ENCODE measurements at regions of chr2 and their contacts with region 1.

Region 1: DNA sequence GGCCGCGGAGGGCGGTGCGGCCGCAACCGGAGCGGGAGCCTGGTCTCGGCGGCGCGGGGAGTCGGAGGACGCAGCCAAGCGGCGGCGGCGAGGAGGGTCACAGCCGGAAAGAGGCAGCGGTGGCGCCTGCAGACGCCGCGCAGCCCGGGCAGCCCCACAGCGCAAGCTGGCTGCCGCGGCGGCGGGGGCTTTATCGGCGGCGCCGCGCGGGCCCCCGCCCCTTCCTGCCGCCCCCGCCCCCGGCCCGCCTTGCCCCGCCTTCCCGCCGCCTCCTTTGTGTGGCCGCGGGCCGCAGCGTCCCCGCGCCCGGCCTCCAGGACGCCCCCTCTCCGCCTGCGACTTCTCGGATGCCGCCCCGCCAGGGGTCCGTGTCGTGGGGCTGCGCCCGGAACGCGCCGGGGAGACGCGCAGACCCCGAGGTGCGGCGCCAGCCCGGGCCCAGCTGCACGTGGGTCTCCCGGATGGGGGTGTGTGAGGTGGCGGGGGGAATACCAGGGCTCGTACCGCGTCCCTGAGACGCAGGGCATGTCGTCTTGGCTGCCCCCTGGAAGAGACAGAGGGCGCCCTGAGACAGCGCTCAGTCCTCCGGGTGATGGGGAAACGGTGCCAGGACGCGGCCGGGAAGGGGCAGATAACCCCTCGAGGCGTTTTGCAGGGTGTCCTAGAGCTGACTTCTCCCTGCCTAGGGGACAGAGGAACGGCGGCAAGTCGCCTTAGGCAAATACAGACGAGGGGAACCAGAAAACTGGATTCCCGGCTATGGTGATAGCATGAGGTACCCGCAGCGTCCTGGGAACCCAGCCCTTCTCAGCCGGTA is at the start of gene SERPINE2:
- DNase-seq: peak; percentile 64
- H3K4me3 Mint-ChIP-seq: peak within 1 kb of the TSS; percentile 84
- H3K27ac Mint-ChIP-seq: peak within 1 kb of the TSS; percentile 10
- H3K4me1 Mint-ChIP-seq: peaks cover 28% of the 10 kb centered on the region
- H3K27me3 Mint-ChIP-seq: no peaks in the 10 kb centered on the region
- CTCF ChIP-seq: peak; percentile 30
- total RNA-seq, gene SERPINE2: 176 and 231 TPM in 2 replicates

Region 2: DNA sequence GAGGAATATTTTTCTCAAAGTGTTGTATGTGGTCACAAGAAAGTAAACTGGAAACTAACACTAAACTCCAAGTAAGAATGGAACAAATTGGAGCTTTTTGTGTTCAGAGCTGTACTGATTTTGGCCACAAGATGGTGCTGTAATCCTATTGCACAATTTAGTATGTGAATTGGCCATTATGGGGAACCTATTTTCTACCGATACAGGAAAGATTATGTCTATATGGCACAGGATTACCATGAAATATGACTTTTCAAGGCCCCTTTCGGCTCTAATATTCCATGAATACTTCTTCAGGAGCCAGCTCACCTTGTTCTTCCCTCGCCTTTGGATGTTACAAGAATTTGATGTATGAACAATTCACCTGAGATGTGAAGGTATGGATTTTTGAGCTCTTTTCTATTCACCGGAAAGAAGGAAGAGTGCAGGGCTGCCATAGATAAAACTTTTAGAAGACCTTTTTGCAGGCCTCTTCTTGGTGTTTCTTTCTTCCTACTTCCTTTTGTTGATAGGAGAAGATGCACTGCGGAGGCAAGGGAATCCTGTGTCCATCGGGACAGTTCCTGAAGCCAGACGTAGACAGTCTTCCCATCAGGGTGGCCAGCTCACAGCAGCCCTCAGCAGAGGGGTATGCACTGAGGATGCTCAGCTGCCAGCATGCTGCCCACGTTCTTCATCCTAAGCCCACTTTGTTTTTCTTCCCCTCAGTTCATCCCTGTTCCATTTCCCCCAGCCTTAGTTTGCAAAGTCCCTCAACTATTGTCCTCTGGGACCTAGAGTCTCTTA is 68.8 kb before region 1 on chr2:
- CTCF ChIA-PET with region 1: interaction called, 4 read pairs
- POLR2A ChIA-PET with region 1: no interaction called
- intact Hi-C with region 1: loop called (anchors 2 kb)
- DNase-seq: peak; percentile 66
- H3K4me3 Mint-ChIP-seq: no peak overlapping the region
- H3K27ac Mint-ChIP-seq: no peak overlapping the region
- H3K4me1 Mint-ChIP-seq: no peaks in the 10 kb centered on the region
- H3K27me3 Mint-ChIP-seq: no peaks in the 10 kb centered on the region
- CTCF ChIP-seq: peak; percentile 75

Region 3: DNA sequence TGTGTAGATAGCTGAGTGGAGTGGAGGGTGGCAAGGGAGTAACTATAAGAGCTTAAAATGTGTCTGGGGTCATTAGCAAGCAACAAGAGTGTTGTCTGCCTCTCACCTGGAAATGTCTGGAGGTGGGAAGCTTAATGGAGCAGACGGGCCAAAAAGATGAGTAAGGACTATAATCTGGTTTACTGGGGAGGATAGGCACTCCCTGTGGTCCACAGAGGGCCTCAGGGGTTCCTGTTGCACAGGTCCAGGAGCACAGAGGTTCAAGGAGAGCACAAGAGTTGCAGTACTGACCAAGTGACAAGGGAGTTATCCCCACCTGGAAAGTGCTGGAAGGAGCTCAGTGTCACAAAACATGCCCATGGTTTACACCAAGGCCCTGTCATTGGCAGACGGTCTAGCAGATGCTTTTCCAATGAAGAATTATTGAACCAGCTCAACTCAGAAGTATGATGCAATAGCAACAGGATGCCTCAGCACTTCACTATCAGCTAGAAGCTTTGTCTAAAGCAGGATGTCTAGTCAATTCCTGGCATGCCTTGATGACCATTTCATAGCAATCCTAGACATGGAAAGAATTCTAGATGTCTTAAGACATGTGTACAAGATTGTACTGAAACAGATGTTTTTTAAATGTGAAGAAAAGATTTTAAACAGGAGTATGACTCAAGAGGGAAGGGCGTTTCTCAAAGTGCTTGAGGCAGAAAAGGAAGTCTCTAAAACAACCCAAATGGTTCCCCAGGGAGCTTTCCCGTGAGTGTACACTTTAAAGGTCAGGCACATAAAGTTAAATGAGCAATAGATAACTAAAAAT is 62.7 kb after region 1 on chr2:
- CTCF ChIA-PET with region 1: no interaction called
- POLR2A ChIA-PET with region 1: no interaction called
- intact Hi-C with region 1: loop called (anchors 1 kb)
- DNase-seq: peak; percentile 66
- H3K4me3 Mint-ChIP-seq: no peak overlapping the region
- H3K27ac Mint-ChIP-seq: peak overlapping the region; percentile 53
- H3K4me1 Mint-ChIP-seq: peaks cover 22% of the 10 kb centered on the region
- H3K27me3 Mint-ChIP-seq: no peaks in the 10 kb centered on the region
- CTCF ChIP-seq: no peak

Region 4: DNA sequence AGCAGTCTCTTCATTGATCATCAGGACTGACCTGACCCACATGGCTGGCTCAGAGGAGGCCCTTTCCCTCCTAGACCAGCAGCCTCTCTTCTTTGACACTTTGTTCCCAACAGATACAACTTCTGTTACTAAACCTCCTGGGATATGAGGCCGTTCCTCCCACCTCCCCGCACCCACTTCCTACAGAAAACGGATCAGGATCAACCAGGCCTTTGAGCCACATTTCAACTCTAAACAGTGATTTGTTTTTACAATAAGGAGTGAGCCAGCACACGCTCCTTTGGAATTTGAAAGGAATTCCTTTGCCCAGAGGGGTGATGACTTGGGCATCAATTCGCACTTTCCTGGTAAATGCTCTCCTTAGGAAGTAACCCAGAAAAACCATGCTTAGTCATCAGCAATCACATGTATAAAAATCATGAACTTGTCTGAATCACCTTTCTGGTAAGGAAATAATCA is 182.2 kb after region 1 on chr2:
- CTCF ChIA-PET with region 1: no interaction called
- POLR2A ChIA-PET with region 1: no interaction called
- intact Hi-C with region 1: loop called (anchors 2 kb)
- DNase-seq: peak; percentile 93
- H3K4me3 Mint-ChIP-seq: no peak overlapping the region
- H3K27ac Mint-ChIP-seq: peak overlapping the region; percentile 99
- H3K4me1 Mint-ChIP-seq: peaks cover 27% of the 10 kb centered on the region
- H3K27me3 Mint-ChIP-seq: no peaks in the 10 kb centered on the region
- CTCF ChIP-seq: no peak

Region 5: GRCh38 chr2:224284134-224284946 is 245.0 kb after region 1 on chr2:
- CTCF ChIA-PET with region 1: interaction called, 34 read pairs
- POLR2A ChIA-PET with region 1: interaction called, 4 read pairs
- intact Hi-C with region 1: loop called (anchors 1 kb)
- DNase-seq: peak; percentile 65
- H3K4me3 Mint-ChIP-seq: no peak overlapping the region
- H3K27ac Mint-ChIP-seq: no peak overlapping the region
- H3K4me1 Mint-ChIP-seq: no peaks in the 10 kb centered on the region
- H3K27me3 Mint-ChIP-seq: peaks cover 25% of the 10 kb centered on the region
- CTCF ChIP-seq: peak; percentile 85

Region 6: DNA sequence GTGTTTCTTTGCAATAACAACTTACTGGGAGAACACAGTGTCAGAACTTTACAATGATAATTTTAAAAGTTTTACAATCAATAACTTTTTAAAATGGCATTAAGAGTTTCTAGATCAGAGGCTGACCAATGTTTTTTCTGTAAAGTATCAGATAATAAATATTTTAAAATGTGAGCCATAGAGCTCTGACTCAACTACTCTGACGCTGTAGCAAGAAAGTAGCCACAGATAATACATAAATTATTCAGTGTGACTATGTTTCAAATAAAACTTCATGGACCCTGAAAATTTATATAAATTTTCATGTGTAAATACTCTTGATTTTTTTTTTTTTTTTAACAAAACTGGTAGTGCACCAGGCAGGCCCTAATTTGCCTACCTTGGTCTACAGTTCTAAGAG is 468.5 kb after region 1 on chr2:
- CTCF ChIA-PET with region 1: no interaction called
- POLR2A ChIA-PET with region 1: no interaction called
- intact Hi-C with region 1: no loop called
- DNase-seq: no peak
- H3K4me3 Mint-ChIP-seq: no peak overlapping the region
- H3K27ac Mint-ChIP-seq: no peak overlapping the region
- H3K4me1 Mint-ChIP-seq: no peaks in the 10 kb centered on the region
- H3K27me3 Mint-ChIP-seq: no peaks in the 10 kb centered on the region
- CTCF ChIP-seq: no peak

Measured in MCF 10A (cell line).